CD4-positive, alpha-beta memory T cell (primary cell): ENCODE measurements at regions of chr2 and their contacts with region 1.

Region 1: DNA sequence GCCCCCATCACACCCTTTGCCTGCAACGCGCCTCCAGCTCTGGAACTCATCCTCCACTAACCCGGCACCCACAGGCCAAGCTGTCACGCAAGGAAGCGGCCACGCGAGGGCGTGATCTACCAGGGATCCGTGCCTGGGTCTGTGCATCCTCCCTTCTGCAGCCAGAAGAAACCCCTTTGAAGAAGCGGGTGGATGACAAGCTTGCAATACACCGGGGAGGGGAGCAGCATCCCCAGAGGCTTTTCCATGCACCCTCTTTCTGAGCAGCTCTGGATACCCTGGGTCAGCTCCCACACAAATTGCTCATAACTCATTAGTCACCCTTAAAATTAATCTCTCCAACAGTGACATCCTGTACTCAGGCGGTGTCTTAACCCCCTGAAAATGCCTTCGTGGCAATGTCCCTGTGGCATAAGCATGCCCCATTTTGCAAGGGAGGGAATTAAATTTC is 47.6 kb downstream of the PDCL3 start:
- DNase-seq: peak; percentile 68 to 79 (median 72)
- H3K4me3 ChIP-seq: no peak overlapping the region
- H3K4me3 Mint-ChIP-seq: no peak overlapping the region
- H3K27ac ChIP-seq: no peak overlapping the region
- H3K27ac Mint-ChIP-seq: no peak overlapping the region
- H3K4me1 ChIP-seq: no peaks in the 10 kb centered on the region
- H3K4me1 Mint-ChIP-seq: peaks cover 2 to 6% (median 5%) of the 10 kb centered on the region in 4 donors
- H3K27me3 ChIP-seq: no peaks in the 10 kb centered on the region
- H3K27me3 Mint-ChIP-seq: no peaks in the 10 kb centered on the region

Region 2: DNA sequence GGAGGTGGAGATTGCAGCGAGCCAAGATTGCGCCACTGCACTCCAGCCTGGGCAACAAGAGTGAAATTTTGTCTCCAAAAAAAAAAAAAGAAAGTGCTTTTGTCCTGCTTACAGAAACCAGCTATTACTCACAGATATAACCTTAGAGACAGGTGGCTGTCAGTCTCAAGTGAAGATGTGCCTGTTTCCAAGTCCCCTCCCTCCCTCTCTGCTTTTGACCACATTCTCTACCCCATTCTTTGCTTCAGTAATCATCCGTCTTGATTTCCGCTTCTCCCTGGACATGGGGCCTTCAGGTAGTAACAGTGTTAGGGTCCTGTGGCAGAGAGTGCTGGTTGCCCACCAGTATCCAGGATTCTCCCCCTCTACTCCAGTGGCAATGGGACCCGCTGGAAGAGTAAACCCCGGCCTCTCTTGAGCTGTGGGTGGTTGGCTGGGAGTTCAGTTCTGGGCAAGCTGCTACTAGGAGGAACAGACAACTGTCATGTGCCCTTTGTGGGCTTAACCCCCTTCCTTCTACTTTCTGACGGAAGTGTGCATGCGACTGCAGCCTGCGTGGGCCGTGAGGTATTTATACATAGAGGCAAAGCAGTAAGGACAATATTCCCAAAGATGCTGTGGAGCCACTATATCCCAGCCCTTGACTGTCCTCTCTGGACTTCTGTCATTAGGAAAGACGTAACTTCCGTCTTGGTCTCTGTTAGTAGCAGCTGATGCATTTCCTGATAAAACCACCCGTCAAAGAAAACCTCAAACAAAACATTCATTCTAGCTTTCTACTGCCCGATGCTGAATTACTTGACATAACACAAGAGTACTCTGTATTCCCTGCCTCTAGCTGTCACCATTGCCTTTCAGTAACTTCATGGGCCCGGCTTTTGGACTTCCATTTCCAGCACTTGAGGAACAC is 29.8 kb before region 1 on chr2:
- CTCF ChIA-PET with region 1: interaction called, 38 read pairs
- POLR2A ChIA-PET with region 1: interaction called, 3 read pairs
- intact Hi-C with region 1: no loop called
- DNase-seq: peak; percentile 73 to 90 (median 80)
- H3K4me3 ChIP-seq: peak overlapping the region in 1 of 2 donors; percentile 17
- H3K4me3 Mint-ChIP-seq: peak overlapping the region in 7 of 8 donors; percentile 32 to 81 (median 69)
- H3K27ac ChIP-seq: peak overlapping the region; percentile 71
- H3K27ac Mint-ChIP-seq: peak overlapping the region; percentile 93 to 99 (median 98)
- H3K4me1 ChIP-seq: peaks cover 37% of the 10 kb centered on the region
- H3K4me1 Mint-ChIP-seq: peaks cover 24 to 52% (median 42%) of the 10 kb centered on the region in 4 donors
- H3K27me3 ChIP-seq: no peaks in the 10 kb centered on the region
- H3K27me3 Mint-ChIP-seq: no peaks in the 10 kb centered on the region

Region 3: DNA sequence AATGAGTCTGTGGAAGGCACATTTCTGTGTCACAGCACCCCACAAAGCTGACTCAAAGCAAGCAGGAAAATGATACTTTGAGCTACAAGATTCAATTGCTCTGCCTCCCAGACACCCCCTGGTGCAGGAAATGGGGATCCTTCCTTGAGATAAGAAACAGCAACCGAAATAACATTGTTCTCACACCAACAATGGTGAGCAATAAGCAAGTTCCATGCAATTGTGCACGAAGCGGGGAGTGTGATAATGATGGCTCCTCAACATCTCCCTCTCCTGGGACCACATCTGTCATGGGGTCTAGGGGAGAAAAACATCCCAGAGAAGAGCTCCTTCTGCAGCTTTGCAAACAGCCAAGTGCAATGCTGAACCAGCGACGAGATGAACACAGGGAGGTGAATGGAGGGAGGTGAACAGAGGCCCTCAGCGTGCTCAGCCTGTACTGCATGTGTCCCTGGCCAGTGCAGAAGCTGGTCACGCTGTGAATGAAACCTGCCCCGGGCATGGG is 20.1 kb after region 1 on chr2:
- CTCF ChIA-PET with region 1: interaction called, 52 read pairs
- POLR2A ChIA-PET with region 1: interaction called, 3 read pairs
- intact Hi-C with region 1: no loop called
- DNase-seq: no peak
- H3K4me3 ChIP-seq: no peak overlapping the region
- H3K4me3 Mint-ChIP-seq: peak overlapping the region in 4 of 8 donors; percentile 17 to 49 (median 31)
- H3K27ac ChIP-seq: no peak overlapping the region
- H3K27ac Mint-ChIP-seq: peak overlapping the region in 3 of 7 donors; percentile 38 to 68 (median 55)
- H3K4me1 ChIP-seq: peaks cover 23% of the 10 kb centered on the region
- H3K4me1 Mint-ChIP-seq: peaks cover 21 to 35% (median 24%) of the 10 kb centered on the region in 4 donors
- H3K27me3 ChIP-seq: no peaks in the 10 kb centered on the region
- H3K27me3 Mint-ChIP-seq: no peaks in the 10 kb centered on the region

Region 4: GRCh38 chr2:100742277-100743254 is 132.2 kb after region 1 on chr2:
- CTCF ChIA-PET with region 1: interaction called, 3 read pairs
- POLR2A ChIA-PET with region 1: no interaction called
- intact Hi-C with region 1: loop called (anchors 5 kb)
- DNase-seq: no peak
- H3K4me3 ChIP-seq: no peak overlapping the region
- H3K4me3 Mint-ChIP-seq: no peak overlapping the region
- H3K27ac ChIP-seq: no peak overlapping the region
- H3K27ac Mint-ChIP-seq: no peak overlapping the region
- H3K4me1 ChIP-seq: no peaks in the 10 kb centered on the region
- H3K4me1 Mint-ChIP-seq: no peaks in the 10 kb centered on the region
- H3K27me3 ChIP-seq: no peaks in the 10 kb centered on the region
- H3K27me3 Mint-ChIP-seq: peaks cover 7 to 8% of the 10 kb centered on the region in 2 donors

Region 5: DNA sequence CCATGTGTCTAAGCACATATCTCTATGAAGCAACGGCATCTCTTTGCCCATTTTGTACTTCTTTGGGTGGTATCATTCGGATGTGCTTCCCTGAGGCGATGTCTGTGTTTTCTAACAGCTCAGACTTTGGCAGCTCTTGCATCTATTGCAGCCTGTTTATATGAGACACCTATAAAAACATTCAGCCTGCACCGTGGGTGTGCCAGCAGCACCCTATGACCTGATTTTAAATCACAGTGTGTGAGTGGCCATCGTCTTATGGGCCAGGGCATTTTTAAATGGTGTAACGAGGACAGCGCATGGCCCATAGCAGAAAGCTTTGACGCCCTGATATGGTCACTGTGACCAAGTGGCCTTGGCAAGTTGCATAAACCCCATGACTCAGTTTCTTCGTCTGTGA is 222.5 kb after region 1 on chr2:
- CTCF ChIA-PET with region 1: no interaction called
- POLR2A ChIA-PET with region 1: no interaction called
- intact Hi-C with region 1: no loop called
- DNase-seq: no peak
- H3K4me3 ChIP-seq: no peak overlapping the region
- H3K4me3 Mint-ChIP-seq: no peak overlapping the region
- H3K27ac ChIP-seq: no peak overlapping the region
- H3K27ac Mint-ChIP-seq: no peak overlapping the region
- H3K4me1 ChIP-seq: no peaks in the 10 kb centered on the region
- H3K4me1 Mint-ChIP-seq: no peaks in the 10 kb centered on the region
- H3K27me3 ChIP-seq: no peaks in the 10 kb centered on the region
- H3K27me3 Mint-ChIP-seq: peaks cover 7 to 16% of the 10 kb centered on the region in 2 donors

Region 6: GRCh38 chr2:100882645-100883613 is 272.5 kb after region 1 on chr2:
- CTCF ChIA-PET with region 1: no interaction called
- POLR2A ChIA-PET with region 1: no interaction called
- intact Hi-C with region 1: no loop called
- DNase-seq: no peak
- H3K4me3 ChIP-seq: no peak overlapping the region
- H3K4me3 Mint-ChIP-seq: no peak overlapping the region
- H3K27ac ChIP-seq: no peak overlapping the region
- H3K27ac Mint-ChIP-seq: no peak overlapping the region
- H3K4me1 ChIP-seq: no peaks in the 10 kb centered on the region
- H3K4me1 Mint-ChIP-seq: no peaks in the 10 kb centered on the region
- H3K27me3 ChIP-seq: no peaks in the 10 kb centered on the region
- H3K27me3 Mint-ChIP-seq: peaks cover 0 to 2% of the 10 kb centered on the region in 2 donors

Region 7: DNA sequence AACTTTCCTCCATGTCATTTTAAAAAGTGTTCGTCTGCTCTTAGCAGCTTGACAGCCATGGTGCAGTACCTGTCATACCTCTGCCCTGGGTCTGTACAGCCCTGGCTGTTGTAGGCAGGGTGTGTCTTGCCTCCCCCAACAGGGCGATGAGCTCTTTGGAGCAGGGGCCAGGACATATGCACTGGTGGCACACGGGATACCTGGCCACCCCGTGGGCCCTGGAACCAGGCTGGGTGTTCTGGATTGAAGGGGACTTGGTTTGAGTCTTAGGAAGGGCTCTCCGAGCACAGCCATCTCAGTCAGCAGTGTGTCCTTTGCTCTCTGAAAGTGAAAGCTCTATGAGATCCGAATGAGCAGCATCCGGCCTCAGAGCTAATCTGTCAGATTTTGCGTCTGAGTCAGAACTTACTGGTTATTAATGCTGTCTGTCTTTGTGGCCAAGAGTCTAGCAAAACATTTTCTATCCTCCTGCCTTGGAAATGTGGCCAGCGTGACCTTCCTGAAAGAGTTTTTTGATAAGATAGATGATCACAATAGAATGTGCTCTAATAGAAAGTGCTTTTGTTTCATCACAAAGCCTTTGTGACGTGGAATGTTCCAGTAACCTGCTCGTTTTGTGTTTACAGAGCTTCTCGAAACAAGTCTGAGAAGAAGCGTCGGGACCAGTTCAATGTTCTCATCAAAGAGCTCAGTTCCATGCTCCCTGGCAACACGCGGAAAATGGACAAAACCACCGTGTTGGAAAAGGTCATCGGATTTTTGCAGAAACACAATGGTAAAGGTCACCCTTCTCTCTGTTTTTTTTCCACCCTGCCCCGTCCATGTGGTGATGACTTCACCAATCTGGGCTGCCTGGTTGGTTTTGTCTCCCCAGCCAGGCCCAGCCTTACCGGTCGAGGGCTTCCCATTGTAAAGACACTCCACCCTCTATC is 314.4 kb after region 1 on chr2:
- CTCF ChIA-PET with region 1: interaction called, 10 read pairs
- POLR2A ChIA-PET with region 1: no interaction called
- intact Hi-C with region 1: loop called (anchors 1 kb)
- DNase-seq: peak; percentile 44 to 64 (median 55)
- H3K4me3 ChIP-seq: peak overlapping the region in 1 of 2 donors; percentile 46
- H3K4me3 Mint-ChIP-seq: peak overlapping the region; percentile 59 to 81 (median 76)
- H3K27ac ChIP-seq: peak overlapping the region; percentile 58
- H3K27ac Mint-ChIP-seq: peak overlapping the region; percentile 84 to 97 (median 93)
- H3K4me1 ChIP-seq: peaks cover 11% of the 10 kb centered on the region
- H3K4me1 Mint-ChIP-seq: peaks cover 16 to 21% (median 18%) of the 10 kb centered on the region in 4 donors
- H3K27me3 ChIP-seq: no peaks in the 10 kb centered on the region
- H3K27me3 Mint-ChIP-seq: no peaks in the 10 kb centered on the region

Region 8: DNA sequence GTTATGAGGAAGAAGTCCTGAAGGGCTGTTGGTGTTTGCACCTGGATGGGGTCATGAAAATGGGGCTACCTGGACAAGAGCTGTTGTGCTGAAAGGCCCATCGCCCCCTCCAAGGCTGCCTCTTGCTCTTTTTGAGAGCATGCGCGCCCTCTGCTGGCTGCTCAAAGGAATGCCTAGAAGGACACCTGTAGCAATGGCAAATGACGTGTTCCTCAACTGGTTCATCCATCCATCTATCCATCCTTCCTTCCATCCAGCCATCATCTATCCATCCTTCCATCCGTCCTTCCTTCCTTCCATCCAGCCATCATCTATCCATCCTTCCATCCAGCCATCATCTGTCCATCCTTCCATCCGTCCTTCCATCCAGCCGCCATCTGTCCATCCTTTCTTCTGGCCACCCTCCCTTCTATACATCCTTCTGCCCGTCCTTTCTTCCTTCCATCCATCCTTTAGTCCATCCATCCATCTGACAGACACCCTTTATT is 374.5 kb after region 1 on chr2:
- CTCF ChIA-PET with region 1: interaction called, 91 read pairs
- POLR2A ChIA-PET with region 1: interaction called, 6 read pairs
- intact Hi-C with region 1: loop called (anchors 1 kb)
- DNase-seq: peak; percentile 69 to 78 (median 70)
- H3K4me3 ChIP-seq: no peak overlapping the region
- H3K4me3 Mint-ChIP-seq: no peak overlapping the region
- H3K27ac ChIP-seq: no peak overlapping the region
- H3K27ac Mint-ChIP-seq: peak overlapping the region in 3 of 7 donors; percentile 45 to 56 (median 54)
- H3K4me1 ChIP-seq: no peaks in the 10 kb centered on the region
- H3K4me1 Mint-ChIP-seq: peaks cover 0 to 4% (median under 1%) of the 10 kb centered on the region in 4 donors
- H3K27me3 ChIP-seq: no peaks in the 10 kb centered on the region
- H3K27me3 Mint-ChIP-seq: peaks cover 0 to 1% of the 10 kb centered on the region in 2 donors

Region 9: GRCh38 chr2:101205521-101205998 is 595.2 kb after region 1 on chr2:
- CTCF ChIA-PET with region 1: interaction called, 6 read pairs
- POLR2A ChIA-PET with region 1: no interaction called
- intact Hi-C with region 1: loop called (anchors 10 kb)
- DNase-seq: peak in 4 of 5 donors; percentile 37 to 57 (median 56)
- H3K4me3 ChIP-seq: no peak overlapping the region
- H3K4me3 Mint-ChIP-seq: peak overlapping the region; percentile 55 to 87 (median 72)
- H3K27ac ChIP-seq: no peak overlapping the region
- H3K27ac Mint-ChIP-seq: peak overlapping the region; percentile 68 to 90 (median 83)
- H3K4me1 ChIP-seq: peaks cover 4% of the 10 kb centered on the region
- H3K4me1 Mint-ChIP-seq: peaks cover 2 to 14% (median 12%) of the 10 kb centered on the region in 4 donors
- H3K27me3 ChIP-seq: no peaks in the 10 kb centered on the region
- H3K27me3 Mint-ChIP-seq: no peaks in the 10 kb centered on the region